ENCODE measurements at regions of chr11 and their contacts with region 1.

Region 1: DNA sequence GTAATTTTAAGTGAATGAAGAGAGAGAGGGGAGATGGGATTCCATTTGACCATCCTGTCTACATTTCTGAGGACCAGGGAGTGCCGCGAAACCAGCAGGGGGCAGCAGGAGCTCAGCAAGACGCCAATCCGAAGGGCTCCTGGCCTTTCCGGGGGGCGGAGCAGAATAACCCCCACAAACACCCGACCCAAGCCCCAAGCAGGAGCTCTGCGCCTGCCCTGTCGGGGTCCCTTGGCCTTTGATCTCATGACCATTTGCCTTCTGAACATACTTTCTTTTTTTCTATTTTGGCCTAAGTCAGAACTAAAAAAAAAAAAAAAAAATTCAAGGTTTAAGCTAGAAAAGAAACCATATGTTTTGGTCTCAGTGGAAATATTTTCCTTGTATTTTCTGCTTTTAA is 21.9 kb upstream of the SCN2B start:
- DNase-seq: peak; percentile 23
- H3K4me3 ChIP-seq: no peak overlapping the region
- H3K27ac ChIP-seq: no peak overlapping the region
- H3K27me3 ChIP-seq: peaks cover 6% of the 10 kb centered on the region
- CTCF ChIP-seq: peak; percentile 86

Region 2: GRCh38 chr11:118171269-118172062 is 26.9 kb before region 1 on chr11:
- CTCF ChIA-PET with region 1: interaction called, 15 read pairs
- POLR2A ChIA-PET with region 1: no interaction called
- DNase-seq: peak; percentile 8
- H3K4me3 ChIP-seq: no peak overlapping the region
- H3K27ac ChIP-seq: no peak overlapping the region
- H3K27me3 ChIP-seq: peaks cover 31% of the 10 kb centered on the region
- CTCF ChIP-seq: peak; percentile 83

Region 3: DNA sequence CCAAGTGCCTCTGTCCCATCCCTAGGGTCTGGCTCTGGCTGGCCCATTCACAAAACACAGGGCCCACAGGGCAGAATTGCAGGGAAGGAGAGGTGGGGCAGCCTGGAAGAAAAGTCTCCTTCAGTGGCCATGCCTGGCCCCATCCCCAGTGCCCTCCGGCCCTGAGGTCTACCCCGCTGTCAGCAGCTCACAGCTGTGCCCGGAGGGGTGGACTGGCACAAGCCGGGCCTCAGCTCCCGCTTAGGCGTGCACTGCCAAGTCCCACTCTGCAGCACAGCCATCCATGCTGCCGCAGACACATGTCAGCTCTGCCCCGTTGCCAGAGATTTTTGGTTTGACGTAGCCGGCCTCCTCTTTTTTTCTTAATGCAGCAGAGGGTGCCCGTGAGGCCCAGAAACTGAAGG is 18.1 kb before region 1 on chr11:
- CTCF ChIA-PET with region 1: interaction called, 12 read pairs
- POLR2A ChIA-PET with region 1: no interaction called
- DNase-seq: no peak
- H3K4me3 ChIP-seq: no peak overlapping the region
- H3K27ac ChIP-seq: no peak overlapping the region
- H3K27me3 ChIP-seq: peaks cover 21% of the 10 kb centered on the region
- CTCF ChIP-seq: no peak

Region 4: DNA sequence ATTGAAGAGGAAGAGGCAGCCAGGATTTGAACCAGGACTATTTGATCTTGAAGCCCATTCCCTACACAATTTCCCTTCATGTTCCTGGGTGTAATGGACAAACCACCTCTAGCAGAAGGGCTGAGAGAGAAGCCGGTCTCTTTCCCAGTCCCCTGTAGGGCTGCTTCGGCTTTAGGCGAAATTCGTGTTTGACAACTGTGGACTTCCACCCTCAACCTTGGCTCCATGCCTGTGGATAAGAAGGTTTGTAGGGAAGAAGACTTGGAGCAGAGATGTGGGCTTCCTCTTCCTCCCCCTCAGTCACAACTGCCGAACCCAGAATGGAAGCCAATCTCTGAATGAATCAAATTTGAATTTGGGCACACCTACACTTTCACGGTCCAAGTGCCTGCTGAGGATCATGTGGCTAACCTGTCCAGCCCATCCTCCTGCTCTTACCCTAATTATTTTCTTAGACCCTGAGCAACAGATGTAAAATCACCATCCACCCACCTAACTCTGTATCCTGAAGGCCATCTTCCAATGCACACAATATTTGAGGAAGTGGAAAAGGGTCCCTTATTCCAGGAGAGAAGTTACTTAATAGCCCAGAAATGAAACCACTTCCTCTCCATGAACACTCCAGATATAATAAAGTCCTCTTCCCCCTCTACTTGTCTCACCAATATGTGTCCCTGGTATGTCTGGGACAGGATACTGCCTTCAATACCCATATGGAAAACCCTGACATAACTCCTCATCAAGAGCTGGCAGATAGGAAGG is 11.8 kb before region 1 on chr11:
- CTCF ChIA-PET with region 1: interaction called, 11 read pairs
- POLR2A ChIA-PET with region 1: no interaction called
- DNase-seq: no peak
- H3K4me3 ChIP-seq: no peak overlapping the region
- H3K27ac ChIP-seq: no peak overlapping the region
- H3K27me3 ChIP-seq: peaks cover 6% of the 10 kb centered on the region
- CTCF ChIP-seq: no peak

Region 5: DNA sequence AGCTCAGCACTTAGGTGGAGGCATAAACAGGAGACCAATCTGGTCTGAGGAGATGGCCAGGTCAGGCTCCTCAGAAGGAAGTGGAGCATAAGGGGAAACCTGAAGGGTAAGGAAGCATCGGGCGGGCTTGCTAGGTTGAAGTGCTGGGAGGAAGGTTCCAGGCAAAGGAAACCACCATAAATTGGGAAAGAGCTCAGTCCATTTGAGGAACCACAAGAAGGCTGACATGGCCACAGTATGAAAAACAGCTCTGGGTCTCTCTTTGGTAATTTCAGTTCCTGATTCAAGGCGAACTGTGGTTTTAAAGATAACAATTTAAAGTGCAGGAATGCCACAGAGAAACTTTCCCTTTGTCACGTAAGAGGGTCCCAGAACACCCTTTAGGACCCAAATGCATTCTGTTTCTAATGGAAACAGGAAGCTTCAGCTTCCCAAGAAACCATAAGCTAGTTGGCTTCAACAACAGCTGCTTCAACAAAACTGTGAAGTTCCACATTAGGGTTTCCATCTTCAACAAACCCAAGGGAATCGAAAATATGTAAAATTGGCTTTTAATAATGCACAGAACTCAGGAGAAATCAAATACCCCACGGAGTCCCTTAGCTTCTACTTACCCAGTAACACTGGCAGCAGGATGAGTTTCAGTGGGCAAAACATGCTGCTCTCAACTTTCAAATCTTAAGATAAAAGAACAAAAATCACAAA is 16.0 kb after region 1 on chr11:
- CTCF ChIA-PET with region 1: interaction called, 26 read pairs
- POLR2A ChIA-PET with region 1: no interaction called
- DNase-seq: no peak
- H3K4me3 ChIP-seq: no peak overlapping the region
- H3K27ac ChIP-seq: no peak overlapping the region
- H3K27me3 ChIP-seq: peaks cover 6% of the 10 kb centered on the region
- CTCF ChIP-seq: no peak

Region 6: DNA sequence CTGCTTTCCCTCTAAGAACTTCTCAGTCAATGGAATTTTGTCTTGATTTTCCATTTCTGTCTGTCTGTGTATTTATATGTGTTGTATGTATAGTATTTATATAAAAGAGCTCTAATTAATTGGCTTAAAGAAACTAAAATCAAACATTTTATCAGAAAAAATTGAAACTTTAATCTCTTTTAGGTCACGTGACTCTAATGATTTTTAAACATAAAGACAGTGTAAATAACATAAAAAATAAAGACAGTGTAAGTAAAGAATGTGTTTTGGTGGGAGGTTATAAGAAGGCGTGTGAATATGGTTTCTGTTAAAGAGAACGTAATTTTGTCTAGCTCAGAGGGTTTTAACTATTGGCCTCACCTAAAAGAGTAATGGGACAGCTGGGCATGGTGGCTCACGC is 24.1 kb after region 1 on chr11:
- CTCF ChIA-PET with region 1: interaction called, 10 read pairs
- POLR2A ChIA-PET with region 1: no interaction called
- DNase-seq: no peak
- H3K4me3 ChIP-seq: no peak overlapping the region
- H3K27ac ChIP-seq: no peak overlapping the region
- H3K27me3 ChIP-seq: peaks cover 9% of the 10 kb centered on the region
- CTCF ChIP-seq: no peak

Region 7: DNA sequence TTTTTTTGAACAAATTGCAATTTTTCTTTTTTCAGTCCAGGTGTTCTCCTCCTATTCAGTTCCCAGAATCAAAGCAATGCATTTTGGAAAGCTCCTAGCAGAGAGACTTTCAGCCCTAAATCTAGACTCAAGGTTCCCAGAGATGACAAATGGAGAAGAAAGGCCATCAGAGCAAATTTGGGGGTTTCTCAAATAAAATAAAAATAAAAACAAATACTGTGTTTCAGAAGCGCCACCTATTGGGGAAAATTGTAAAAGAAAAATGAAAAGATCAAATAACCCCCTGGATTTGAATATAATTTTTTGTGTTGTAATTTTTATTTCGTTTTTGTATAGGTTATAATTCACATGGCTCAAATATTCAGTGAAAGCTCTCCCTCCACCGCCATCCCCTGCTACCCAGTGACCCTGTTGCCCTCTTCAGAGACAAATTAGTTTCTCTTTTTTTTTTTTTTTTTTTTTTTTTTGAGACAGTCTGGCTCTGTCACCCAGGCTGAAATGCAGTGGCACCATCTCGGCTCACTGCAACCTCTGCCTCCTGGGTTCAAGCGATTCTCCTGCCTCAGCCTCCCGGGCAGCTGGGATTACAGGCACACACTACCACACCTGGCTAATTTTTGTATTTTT is 154.8 kb after region 1 on chr11:
- CTCF ChIA-PET with region 1: interaction called, 60 read pairs
- POLR2A ChIA-PET with region 1: no interaction called
- DNase-seq: no peak
- H3K4me3 ChIP-seq: no peak overlapping the region
- H3K27ac ChIP-seq: no peak overlapping the region
- H3K27me3 ChIP-seq: peaks cover 17% of the 10 kb centered on the region
- CTCF ChIP-seq: peak; percentile 55